Calu3 (cell line): ENCODE measurements at regions of chr5 and their contacts with region 1.

Region 1: DNA sequence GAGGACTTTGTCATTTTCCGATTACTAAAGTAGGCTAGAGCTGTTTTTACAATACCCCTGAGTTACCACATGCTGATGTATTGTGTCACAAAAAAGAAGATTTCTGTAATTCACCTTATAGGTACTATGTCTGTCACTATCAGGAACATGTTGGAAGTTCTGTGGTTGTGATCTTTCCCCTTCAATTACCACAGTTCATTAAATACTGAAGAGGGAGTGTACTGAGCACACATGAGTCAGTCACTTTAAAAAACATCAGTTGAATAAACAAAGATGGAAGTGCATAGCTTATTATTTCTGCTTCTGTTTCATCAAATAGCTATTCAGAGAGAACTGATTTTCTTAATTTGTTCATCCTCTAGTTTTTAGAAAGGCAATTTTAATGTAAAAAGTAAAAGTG is 31.7 kb downstream of the AP3S1 start:
- DNase-seq: no peak
- H3K4me3 Mint-ChIP-seq: no peak overlapping the region
- H3K27ac Mint-ChIP-seq: no peak overlapping the region
- H3K4me1 Mint-ChIP-seq: peaks cover 19% of the 10 kb centered on the region
- H3K27me3 Mint-ChIP-seq: no peaks in the 10 kb centered on the region
- CTCF ChIP-seq: no peak

Region 2: GRCh38 chr5:115857636-115858309 is 15.6 kb before region 1 on chr5:
- CTCF ChIA-PET with region 1: no interaction called
- intact Hi-C with region 1: loop called (anchors 2 kb)
- DNase-seq: no peak
- H3K4me3 Mint-ChIP-seq: no peak overlapping the region
- H3K27ac Mint-ChIP-seq: no peak overlapping the region
- H3K4me1 Mint-ChIP-seq: peaks cover 25% of the 10 kb centered on the region
- H3K27me3 Mint-ChIP-seq: no peaks in the 10 kb centered on the region
- CTCF ChIP-seq: no peak